SK-N-SH (cell line): ENCODE measurements at regions of chr7 and their contacts with region 1.

Region 1: DNA sequence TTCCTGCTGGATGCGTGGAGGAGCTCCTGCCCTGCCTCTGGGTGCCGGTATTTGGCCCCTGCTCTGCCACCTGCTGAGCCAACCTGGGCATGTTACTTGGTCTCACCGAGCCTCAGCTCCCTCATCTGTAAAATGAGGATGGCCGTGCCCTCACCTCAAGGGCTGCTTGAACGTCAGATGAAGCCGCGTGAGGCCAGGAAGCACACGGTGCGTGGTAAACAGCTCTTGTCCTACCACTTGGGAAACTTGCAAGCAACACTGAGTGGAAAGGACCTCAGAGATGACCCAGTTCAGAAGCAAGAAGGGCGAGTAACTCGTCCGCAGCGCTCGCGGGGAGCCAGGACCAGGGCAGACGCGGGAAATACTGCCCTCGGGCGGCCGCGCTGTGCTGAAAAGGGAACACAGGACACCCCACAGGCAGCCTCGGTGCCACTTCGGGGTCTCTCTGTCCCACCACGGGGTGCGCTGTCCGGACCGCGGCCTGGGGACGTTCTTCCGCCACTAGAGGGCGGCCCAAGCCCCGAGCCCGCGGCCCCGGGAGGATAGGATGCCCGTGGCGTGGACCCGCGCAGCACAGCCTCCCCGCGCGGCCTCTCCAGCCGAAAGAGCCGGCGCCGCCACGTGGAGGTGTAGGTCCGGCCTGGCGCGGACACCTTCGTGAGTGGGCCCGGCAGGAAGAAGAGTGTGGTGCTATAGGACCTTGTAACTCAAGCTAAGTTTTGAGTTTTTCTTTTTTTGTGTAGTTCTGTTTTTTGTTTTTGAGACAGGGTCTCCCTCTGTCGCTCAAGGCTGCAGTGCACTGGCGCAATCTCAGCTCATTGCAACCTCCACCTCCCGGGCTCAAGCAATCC is 94.1 kb downstream of the PRKAG2 start:
- DNase-seq: peak; percentile 98
- H3K4me3 ChIP-seq: peak overlapping the region; percentile 28 to 59
- H3K27ac ChIP-seq: no peak overlapping the region
- H3K4me1 ChIP-seq: peaks cover 0 to 7% of the 10 kb centered on the region in 2 experiments; a peak in 1 of 4 replicates
- H3K27me3 ChIP-seq: peaks cover 15% of the 10 kb centered on the region; the same call in 1 of the 2 replicates
- CTCF ChIP-seq: peak; percentile 98
- EP300 ChIP-seq: no peak; a peak in 1 of 4 replicates
- RAD21 ChIP-seq: peak; percentile 75

Region 2: GRCh38 chr7:151570366-151570915 is 212.4 kb before region 1 on chr7:
- CTCF ChIA-PET with region 1: interaction called, 14 read pairs
- POLR2A ChIA-PET with region 1: no interaction called
- DNase-seq: no peak
- H3K4me3 ChIP-seq: no peak overlapping the region
- H3K27ac ChIP-seq: no peak overlapping the region
- H3K4me1 ChIP-seq: peaks cover 2 to 4% of the 10 kb centered on the region in 2 experiments
- H3K27me3 ChIP-seq: no peaks in the 10 kb centered on the region
- CTCF ChIP-seq: peak; percentile 99
- EP300 ChIP-seq: no peak
- RAD21 ChIP-seq: peak; percentile 84

Region 3: DNA sequence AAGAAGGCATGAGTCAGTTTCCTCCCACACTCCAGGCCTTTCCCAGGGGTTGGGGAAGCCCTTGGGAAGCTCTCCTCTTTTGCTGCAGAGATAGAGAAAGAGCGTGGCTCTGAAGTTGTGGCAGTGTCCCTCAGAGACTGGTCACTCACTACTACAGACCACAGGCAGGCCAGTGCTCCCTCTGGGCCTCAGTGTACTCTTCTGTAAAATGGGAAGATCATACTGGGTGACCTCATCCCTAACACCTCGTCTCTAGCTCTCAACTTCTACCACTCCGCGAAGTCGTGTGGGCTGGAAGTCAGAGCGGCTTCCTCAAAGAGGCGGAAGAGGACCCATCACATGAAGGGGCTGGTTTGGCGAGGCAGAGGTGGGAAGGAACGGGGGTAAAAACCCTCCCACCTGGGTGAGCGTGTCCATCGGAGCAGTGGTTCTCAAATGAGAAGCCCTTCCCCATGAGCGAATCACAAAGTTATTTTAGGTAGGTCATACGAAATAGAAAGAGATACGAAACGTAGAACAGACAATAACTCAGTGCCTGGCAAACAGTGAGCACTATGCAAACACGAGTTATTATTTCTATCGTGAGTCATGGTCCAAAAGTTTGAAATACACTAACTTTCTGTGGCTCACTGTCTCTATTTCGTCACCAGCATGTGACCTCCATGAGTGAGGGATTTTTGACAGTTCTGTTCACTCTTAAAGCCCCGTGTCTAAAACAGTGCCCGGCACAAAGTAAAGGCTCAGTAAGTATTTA is 61.4 kb after region 1 on chr7:
- CTCF ChIA-PET with region 1: interaction called, 17 read pairs
- POLR2A ChIA-PET with region 1: no interaction called
- DNase-seq: no peak
- H3K4me3 ChIP-seq: no peak overlapping the region
- H3K27ac ChIP-seq: no peak overlapping the region
- H3K4me1 ChIP-seq: no peaks in the 10 kb centered on the region
- H3K27me3 ChIP-seq: no peaks in the 10 kb centered on the region
- CTCF ChIP-seq: no peak
- EP300 ChIP-seq: no peak
- RAD21 ChIP-seq: no peak

Region 4: GRCh38 chr7:151868396-151869108 is 85.7 kb after region 1 on chr7:
- CTCF ChIA-PET with region 1: interaction called, 20 read pairs
- POLR2A ChIA-PET with region 1: no interaction called
- DNase-seq: no peak
- H3K4me3 ChIP-seq: no peak overlapping the region
- H3K27ac ChIP-seq: peak overlapping the region in 1 of 2 experiments; percentile 79; a peak in 2 of 4 replicates
- H3K4me1 ChIP-seq: peaks cover 0 to 22% of the 10 kb centered on the region in 2 experiments; a peak in 1 of 4 replicates
- H3K27me3 ChIP-seq: peaks cover 41% of the 10 kb centered on the region
- CTCF ChIP-seq: no peak
- EP300 ChIP-seq: no peak
- RAD21 ChIP-seq: no peak

Region 5: GRCh38 chr7:151900986-151901621 is 118.3 kb after region 1 on chr7:
- CTCF ChIA-PET with region 1: interaction called, 13 read pairs
- POLR2A ChIA-PET with region 1: no interaction called
- DNase-seq: no peak
- H3K4me3 ChIP-seq: no peak overlapping the region
- H3K27ac ChIP-seq: no peak overlapping the region
- H3K4me1 ChIP-seq: peaks cover 0 to 3% of the 10 kb centered on the region in 2 experiments; a peak in 1 of 4 replicates
- H3K27me3 ChIP-seq: peaks cover 19% of the 10 kb centered on the region; the same call in 1 of the 2 replicates
- CTCF ChIP-seq: no peak
- EP300 ChIP-seq: no peak
- RAD21 ChIP-seq: no peak

Region 6: DNA sequence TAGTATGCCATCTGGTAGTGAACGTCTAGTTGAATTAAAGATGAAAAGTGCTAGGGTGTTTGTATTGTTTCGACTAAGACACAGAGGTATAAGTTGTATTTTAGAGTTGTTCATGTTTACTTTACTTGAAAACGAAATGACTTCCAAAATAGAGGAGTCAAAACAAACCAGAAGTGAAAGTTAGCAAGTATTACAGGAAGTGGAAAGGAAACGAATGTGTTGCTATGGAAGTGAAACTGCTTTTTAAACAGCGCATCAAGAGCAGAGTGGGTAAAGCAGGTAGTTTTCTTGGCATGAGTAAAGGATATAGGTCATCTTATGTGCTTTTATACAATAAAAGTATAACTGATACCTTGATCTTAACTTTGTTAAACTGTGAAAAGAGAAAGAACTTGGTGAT is 153.4 kb after region 1 on chr7:
- CTCF ChIA-PET with region 1: interaction called, 120 read pairs
- POLR2A ChIA-PET with region 1: no interaction called
- DNase-seq: no peak
- H3K4me3 ChIP-seq: no peak overlapping the region
- H3K27ac ChIP-seq: no peak overlapping the region
- H3K4me1 ChIP-seq: peaks cover 0 to 4% of the 10 kb centered on the region in 2 experiments; a peak in 1 of 4 replicates
- H3K27me3 ChIP-seq: peaks cover 4% of the 10 kb centered on the region; the same call in 1 of the 2 replicates
- CTCF ChIP-seq: no peak
- EP300 ChIP-seq: no peak
- RAD21 ChIP-seq: no peak